ENCODE measurements at regions of chrX and their contacts with region 1.

Region 1: GRCh38 chrX:83916525-83916924 is 55.6 kb downstream of the CYLC1 start:
- DNase-seq: peak; percentile 11
- ATAC-seq: peak; percentile 48; the same call in 1 of the 2 replicates
- H3K4me3 ChIP-seq: no peak overlapping the region
- H3K27ac ChIP-seq: no peak overlapping the region
- H3K4me1 ChIP-seq: no peaks in the 10 kb centered on the region
- H3K27me3 ChIP-seq: no peaks in the 10 kb centered on the region
- CTCF ChIP-seq: peak; percentile 54
- POLR2A ChIP-seq: no peak
- RAD21 ChIP-seq: peak; percentile 54

Region 2: DNA sequence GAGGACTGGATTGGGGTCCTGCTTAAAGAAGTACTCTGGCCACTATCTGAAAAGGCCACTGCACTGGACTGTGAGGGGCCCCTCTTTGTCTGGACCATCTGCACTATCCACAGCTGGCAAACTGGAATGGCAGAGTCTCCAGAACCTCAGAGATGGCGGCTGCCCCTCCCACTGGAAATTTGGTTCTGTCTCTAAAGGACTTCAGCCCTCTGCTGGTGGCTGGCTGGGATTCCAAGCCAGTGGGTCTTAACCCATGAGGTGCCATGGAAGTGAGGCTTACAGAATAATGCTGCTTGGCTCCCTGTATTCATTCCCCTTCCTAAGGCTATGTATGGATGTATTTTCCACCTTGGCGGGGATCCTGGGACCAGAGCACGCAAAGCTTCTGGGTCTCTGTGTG is 97.2 kb before region 1 on chrX:
- CTCF ChIA-PET with region 1: no interaction called
- POLR2A ChIA-PET with region 1: no interaction called
- dilution Hi-C with region 1: no loop called
- in situ Hi-C with region 1: no loop called
- intact Hi-C with region 1: no loop called
- DNase-seq: no peak
- ATAC-seq: no peak
- H3K4me3 ChIP-seq: no peak overlapping the region
- H3K27ac ChIP-seq: no peak overlapping the region
- H3K4me1 ChIP-seq: no peaks in the 10 kb centered on the region
- H3K27me3 ChIP-seq: no peaks in the 10 kb centered on the region
- CTCF ChIP-seq: no peak
- POLR2A ChIP-seq: no peak
- RAD21 ChIP-seq: no peak

Region 3: GRCh38 chrX:84188320-84188834 is 271.9 kb after region 1 on chrX:
- CTCF ChIA-PET with region 1: no interaction called
- POLR2A ChIA-PET with region 1: no interaction called
- dilution Hi-C with region 1: no loop called
- in situ Hi-C with region 1: no loop called
- intact Hi-C with region 1: loop called (anchors 1 kb)
- DNase-seq: peak; percentile 64
- ATAC-seq: peak; percentile 75
- H3K4me3 ChIP-seq: peak overlapping the region; percentile 68
- H3K27ac ChIP-seq: no peak overlapping the region
- H3K4me1 ChIP-seq: no peaks in the 10 kb centered on the region
- H3K27me3 ChIP-seq: no peaks in the 10 kb centered on the region
- CTCF ChIP-seq: 0 out of 2 replicates have a peak, but pooled peaks have one; percentile 5
- POLR2A ChIP-seq: no peak
- RAD21 ChIP-seq: 0 out of 2 replicates have a peak, but pooled peaks have one; percentile 8

Region 4: DNA sequence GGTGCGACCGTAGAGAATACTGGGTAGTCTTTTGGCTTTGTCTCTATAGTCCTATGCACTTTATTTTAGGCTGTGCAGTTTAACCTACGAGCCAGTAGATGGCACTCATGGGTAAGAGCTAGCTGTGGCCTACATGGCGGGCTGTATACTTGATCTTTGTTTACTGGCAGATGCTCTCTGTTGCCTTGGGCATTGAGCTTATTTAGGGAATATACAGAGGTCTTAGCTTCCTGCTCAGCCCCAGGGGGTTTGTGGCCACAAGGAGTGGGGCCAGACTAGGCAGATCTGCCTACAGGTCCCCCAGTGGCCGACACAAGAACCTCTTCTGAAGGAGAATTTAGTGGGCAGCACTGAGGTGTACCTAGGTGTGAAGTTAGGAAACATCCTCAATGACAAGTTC is 813.3 kb after region 1 on chrX:
- CTCF ChIA-PET with region 1: no interaction called
- POLR2A ChIA-PET with region 1: no interaction called
- dilution Hi-C with region 1: no loop called
- in situ Hi-C with region 1: no loop called
- intact Hi-C with region 1: loop called (anchors 10 kb)
- DNase-seq: peak; percentile 31
- ATAC-seq: peak; percentile 98
- H3K4me3 ChIP-seq: no peak overlapping the region
- H3K27ac ChIP-seq: no peak overlapping the region
- H3K4me1 ChIP-seq: peaks cover 2% of the 10 kb centered on the region
- H3K27me3 ChIP-seq: no peaks in the 10 kb centered on the region
- CTCF ChIP-seq: peak; percentile 73
- POLR2A ChIP-seq: no peak
- RAD21 ChIP-seq: peak; percentile 69

Region 5: GRCh38 chrX:84907324-84907968 is 990.9 kb after region 1 on chrX:
- CTCF ChIA-PET with region 1: no interaction called
- POLR2A ChIA-PET with region 1: no interaction called
- dilution Hi-C with region 1: no loop called
- in situ Hi-C with region 1: no loop called
- intact Hi-C with region 1: loop called (anchors 5 kb)
- DNase-seq: peak; percentile 5
- ATAC-seq: peak; percentile 49; the same call in 1 of the 2 replicates
- H3K4me3 ChIP-seq: no peak overlapping the region
- H3K27ac ChIP-seq: no peak overlapping the region
- H3K4me1 ChIP-seq: no peaks in the 10 kb centered on the region
- H3K27me3 ChIP-seq: no peaks in the 10 kb centered on the region
- CTCF ChIP-seq: peak; percentile 37
- POLR2A ChIP-seq: no peak
- RAD21 ChIP-seq: peak; percentile 26

Region 6: DNA sequence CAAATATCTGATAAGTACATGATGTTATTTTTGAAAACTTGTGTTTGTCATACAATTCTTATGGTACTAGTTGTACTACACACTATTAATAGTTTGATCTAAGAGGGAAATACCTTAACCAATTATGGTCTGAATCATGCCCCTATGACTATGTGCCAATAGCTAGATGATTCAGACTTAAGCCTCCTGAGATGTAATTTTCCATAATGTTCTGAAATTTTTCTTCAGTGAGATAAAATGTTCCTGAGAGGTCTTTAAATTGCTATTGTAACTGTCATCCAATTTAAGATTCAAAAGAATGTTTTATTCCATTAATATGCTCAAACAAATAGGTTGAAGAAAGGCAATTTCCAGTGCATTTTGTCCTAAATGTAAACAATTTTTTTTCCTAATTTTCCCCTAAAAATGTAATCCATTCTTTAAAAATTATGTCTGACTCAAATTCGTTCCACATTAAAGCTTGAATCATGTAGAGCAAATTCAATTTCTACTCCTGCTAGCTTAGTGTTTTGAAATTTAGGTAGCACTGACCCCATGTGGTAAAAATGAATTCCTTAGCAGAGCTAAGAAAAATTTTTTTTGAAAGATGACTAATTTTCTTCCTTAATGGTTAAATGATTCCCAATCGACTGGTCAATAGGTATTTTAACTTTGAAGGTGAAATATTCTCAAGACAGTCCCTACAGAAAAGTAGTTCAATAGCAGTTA is 1136.3 kb after region 1 on chrX:
- CTCF ChIA-PET with region 1: no interaction called
- POLR2A ChIA-PET with region 1: no interaction called
- dilution Hi-C with region 1: no loop called
- in situ Hi-C with region 1: no loop called
- intact Hi-C with region 1: loop called (anchors 10 kb)
- DNase-seq: peak; percentile 86
- ATAC-seq: peak; percentile 81
- H3K4me3 ChIP-seq: no peak overlapping the region
- H3K27ac ChIP-seq: peak overlapping the region; percentile 49; the same call in 1 of the 2 replicates
- H3K4me1 ChIP-seq: no peaks in the 10 kb centered on the region
- H3K27me3 ChIP-seq: no peaks in the 10 kb centered on the region
- CTCF ChIP-seq: peak; percentile 53
- POLR2A ChIP-seq: no peak
- RAD21 ChIP-seq: peak; percentile 51

Measured in IMR-90 (cell line).